Lower leg skin (tissue), 4 donors: ENCODE measurements at regions of chr5 and their contacts with region 1.

Region 1: GRCh38 chr5:162512935-162513575 is 445.5 kb downstream of the GABRG2 start:
- DNase-seq: no peak
- H3K4me3 ChIP-seq: no peak overlapping the region
- CTCF ChIP-seq: no peak
- POLR2A ChIP-seq: no peak

Region 2: DNA sequence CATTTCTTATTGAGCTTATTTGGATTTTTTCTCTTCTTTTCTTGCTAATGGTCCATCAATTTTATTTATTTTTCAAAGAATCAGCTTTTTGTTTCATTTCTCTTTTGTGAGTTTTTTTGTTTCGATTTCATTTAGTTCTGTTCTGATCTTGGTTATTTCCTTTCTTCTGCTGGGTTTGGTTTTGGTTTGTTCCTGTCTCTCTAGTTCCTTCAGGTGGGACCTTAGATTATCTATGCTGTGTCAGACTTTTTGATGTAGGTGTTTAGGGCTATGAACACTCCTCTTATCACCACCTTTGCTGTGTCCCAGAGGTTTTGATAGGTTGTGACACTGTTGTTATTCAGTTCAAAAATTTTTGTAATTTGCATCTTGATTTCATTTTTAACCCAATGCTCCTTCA is 325.7 kb before region 1 on chr5:
- intact Hi-C with region 1: no loop called
- DNase-seq: no peak
- H3K4me3 ChIP-seq: no peak overlapping the region
- CTCF ChIP-seq: no peak
- POLR2A ChIP-seq: no peak

Region 3: DNA sequence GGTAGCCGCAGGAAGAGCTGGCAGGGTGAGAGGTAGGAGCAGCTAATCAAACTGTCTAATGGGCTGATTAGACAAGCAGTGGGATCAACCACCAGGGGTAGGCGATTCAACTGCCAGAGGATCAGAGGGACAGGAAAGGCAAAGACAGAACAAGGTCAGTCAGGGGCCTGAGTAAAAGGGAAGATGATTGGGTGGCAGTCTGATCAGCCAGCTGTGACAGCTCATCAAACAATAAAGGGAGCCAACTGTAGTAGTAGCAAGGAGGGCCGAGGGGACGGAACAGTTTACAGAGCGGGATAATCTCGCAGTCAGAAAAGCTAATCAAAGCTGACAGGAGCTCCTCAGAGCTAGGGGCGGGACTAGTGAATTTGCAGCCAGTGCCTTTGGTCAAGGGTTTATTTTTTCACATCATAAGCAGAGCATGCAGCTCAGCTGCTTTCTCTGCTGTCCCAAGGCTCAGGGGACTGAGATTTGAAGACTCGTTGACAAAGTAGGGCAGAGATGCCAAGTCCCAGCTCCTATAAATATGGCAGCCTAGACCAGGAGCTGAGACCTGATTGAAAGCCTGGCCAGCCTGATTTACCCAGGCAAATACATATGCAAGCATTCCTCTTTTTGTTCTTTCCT is 27.3 kb before region 1 on chr5:
- intact Hi-C with region 1: loop called (anchors 1 kb)
- DNase-seq: no peak
- H3K4me3 ChIP-seq: no peak overlapping the region
- CTCF ChIP-seq: no peak
- POLR2A ChIP-seq: no peak

Region 4: GRCh38 chr5:162837155-162837554 is 324.1 kb after region 1 on chr5:
- intact Hi-C with region 1: no loop called
- DNase-seq: no peak
- H3K4me3 ChIP-seq: no peak overlapping the region
- CTCF ChIP-seq: no peak
- POLR2A ChIP-seq: no peak

Region 5: DNA sequence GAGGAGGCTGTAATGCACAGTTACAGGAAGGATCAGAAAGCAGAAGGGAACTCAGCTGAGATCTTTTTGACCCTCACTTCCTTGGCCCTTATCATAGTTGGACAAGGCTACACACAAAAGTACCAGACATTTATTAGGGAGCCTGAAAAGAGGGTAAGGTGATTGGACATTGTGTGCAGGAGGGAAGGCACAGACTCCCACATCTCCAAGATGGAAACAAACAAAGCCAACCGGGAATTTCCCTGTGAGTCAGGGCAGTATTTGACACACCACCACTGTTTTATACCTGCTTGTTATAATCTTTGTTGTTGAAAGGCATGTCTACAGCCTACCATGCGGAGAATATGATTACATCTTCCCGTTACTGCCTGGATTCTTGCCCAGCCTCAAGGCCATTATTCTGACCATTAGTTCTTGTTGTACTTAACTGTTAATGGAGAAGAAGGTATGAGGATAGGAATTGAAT is 921.4 kb after region 1 on chr5:
- intact Hi-C with region 1: no loop called
- DNase-seq: no peak
- H3K4me3 ChIP-seq: no peak overlapping the region
- CTCF ChIP-seq: no peak
- POLR2A ChIP-seq: no peak